ENCODE measurements at regions of chr16 and their contacts with region 1.

Region 1: GRCh38 chr16:3457434-3458252 is 14.2 kb downstream of the NAA60 start:
- DNase-seq: peak; percentile 90
- H3K4me3 ChIP-seq: peak overlapping the region; percentile 76 to 95 (median 82)
- H3K27ac ChIP-seq: peak overlapping the region; percentile 94 to 99 (median 96)
- H3K4me1 ChIP-seq: peaks cover 30 to 61% (median 43%) of the 10 kb centered on the region in 4 donors
- H3K27me3 ChIP-seq: no peaks in the 10 kb centered on the region
- CTCF ChIP-seq: peak in 4 of 5 experiments; percentile 25 to 59 (median 46)
- EP300 ChIP-seq: no peak
- POLR2A ChIP-seq: peak; percentile 72

Region 2: DNA sequence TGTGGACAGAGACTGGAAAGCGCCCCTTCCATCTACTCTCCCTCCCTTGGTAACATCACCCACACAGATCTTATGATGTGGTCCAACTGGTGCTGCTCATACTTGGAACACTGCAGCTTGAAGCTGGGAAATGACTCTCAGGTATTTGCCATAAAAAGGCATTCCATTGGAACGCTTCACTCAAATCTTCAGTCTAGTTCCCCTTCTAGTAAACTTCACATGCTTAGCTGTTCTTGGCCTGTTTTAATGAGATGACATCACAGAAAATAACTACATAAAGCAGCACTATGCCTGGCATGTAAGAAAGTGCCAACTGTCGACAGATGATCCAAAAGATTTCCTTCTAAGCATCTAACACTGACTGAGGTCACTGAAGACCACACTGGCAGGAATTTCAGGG is 165.0 kb before region 1 on chr16:
- in situ Hi-C with region 1: no loop called
- intact Hi-C with region 1: loop called (anchors 5 kb)
- DNase-seq: no peak
- H3K4me3 ChIP-seq: no peak overlapping the region
- H3K27ac ChIP-seq: no peak overlapping the region
- H3K4me1 ChIP-seq: no peaks in the 10 kb centered on the region
- H3K27me3 ChIP-seq: no peaks in the 10 kb centered on the region
- CTCF ChIP-seq: no peak
- EP300 ChIP-seq: no peak
- POLR2A ChIP-seq: no peak

Region 3: DNA sequence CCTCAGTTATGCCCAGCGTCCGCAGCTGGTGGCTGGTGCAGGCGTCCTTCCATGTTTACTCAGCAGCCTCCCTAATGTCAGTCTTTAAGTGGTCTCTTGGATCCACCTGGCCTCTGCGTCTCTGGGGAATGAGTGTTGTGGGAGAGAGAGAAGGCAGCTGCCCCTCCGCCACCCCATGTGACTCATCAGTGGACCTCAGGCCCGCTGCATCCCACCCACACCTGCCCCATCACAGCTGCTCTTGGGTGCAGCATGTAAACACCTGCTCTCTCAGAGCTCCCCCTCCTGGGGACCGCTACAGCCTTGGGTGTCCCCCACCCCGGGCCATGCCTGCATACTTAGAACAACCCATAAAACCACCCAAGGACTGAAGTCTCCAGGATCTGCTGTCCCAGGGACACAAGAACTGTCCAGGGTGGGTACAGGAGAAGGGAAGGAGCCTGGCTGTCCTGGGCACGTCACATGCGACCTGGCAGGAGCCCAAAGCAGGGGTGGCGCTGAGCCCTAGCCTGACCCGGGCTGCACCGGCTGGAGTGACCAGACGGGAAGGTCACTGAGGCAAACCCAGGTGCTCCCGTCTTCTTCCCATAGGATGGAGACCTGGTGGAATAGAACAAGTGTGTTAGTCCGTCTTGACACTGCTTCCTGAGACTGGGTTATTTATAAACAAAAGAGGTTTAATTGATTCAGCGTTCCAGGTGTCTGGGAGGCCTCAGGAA is 33.4 kb after region 1 on chr16:
- in situ Hi-C with region 1: no loop called
- intact Hi-C with region 1: no loop called
- DNase-seq: no peak
- H3K4me3 ChIP-seq: no peak overlapping the region
- H3K27ac ChIP-seq: no peak overlapping the region
- H3K4me1 ChIP-seq: no peaks in the 10 kb centered on the region
- H3K27me3 ChIP-seq: no peaks in the 10 kb centered on the region
- CTCF ChIP-seq: no peak
- EP300 ChIP-seq: no peak
- POLR2A ChIP-seq: no peak

Region 4: DNA sequence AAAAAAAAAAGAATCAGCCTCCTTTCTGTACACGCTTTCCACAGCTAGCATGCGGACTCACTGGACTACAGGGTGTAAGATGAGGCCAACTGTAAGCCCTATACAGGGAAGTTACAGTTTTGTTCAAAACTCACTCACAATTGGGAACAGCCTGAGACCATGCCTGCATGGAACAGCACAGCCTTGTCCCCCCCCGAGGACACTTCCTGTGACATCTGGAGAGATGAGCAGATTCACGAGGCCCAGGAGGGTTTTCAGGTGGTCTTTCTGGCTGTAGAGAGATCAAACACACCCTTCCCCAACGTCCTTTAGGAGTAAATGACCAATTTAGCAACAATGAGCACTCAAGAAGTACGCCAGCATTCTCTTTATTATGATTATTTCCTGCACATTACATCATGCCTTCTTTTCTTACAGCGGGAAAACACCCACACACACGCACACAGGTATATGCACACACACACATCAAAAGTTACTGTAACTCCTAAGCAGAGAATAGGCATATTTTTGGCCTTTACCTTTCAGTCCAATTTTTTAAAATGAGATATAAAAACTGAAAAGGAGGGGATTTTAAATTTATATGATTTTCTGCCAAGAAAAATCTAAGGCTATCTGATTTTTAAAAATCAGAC is 619.6 kb after region 1 on chr16:
- in situ Hi-C with region 1: no loop called
- intact Hi-C with region 1: no loop called
- DNase-seq: no peak
- H3K4me3 ChIP-seq: no peak overlapping the region
- H3K27ac ChIP-seq: no peak overlapping the region
- H3K4me1 ChIP-seq: peaks cover 0 to 16% (median 8%) of the 10 kb centered on the region in 4 donors
- H3K27me3 ChIP-seq: no peaks in the 10 kb centered on the region
- CTCF ChIP-seq: no peak
- EP300 ChIP-seq: no peak
- POLR2A ChIP-seq: no peak

Measured in transverse colon (tissue), 4 donors.